ENCODE measurements at regions of chr7 and their contacts with region 1.

Region 1: GRCh38 chr7:129825496-129826267 is 127.1 kb downstream of the UBE2H start:
- DNase-seq: peak; percentile 96

Region 2: DNA sequence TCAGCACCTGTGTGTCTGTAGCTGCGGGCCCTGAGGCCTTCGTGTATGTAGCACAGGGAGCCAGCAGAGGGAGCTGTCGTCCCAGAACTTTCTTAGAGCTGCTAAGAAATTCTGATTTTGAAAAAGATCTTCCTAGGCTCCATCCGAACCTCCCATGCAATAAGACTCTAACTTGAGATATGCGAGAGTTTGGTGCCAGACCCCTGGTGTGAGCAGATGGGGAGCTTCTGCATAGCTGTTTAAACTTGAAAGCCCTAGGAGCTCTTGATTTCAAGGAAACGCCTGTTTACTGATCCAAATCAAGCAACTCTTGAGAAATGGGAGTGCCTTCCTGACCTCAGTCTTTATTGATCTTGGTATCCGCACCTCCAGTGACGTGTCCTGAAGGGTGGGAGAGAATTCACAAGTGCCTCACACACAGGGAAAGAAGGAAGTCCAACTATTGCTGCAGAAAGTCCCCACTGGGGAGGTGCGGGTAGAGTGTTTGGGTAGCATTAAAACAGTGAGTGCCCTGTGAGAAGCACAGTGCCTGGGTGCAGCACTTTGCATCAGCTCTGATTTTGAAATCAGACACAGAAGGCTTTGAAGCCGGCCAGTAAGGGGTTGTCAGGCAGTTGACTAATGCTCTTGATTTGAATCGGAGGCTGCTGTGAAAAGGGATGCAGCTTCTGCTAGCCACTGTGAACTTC is 457.8 kb before region 1 on chr7:
- intact Hi-C with region 1: loop called (anchors 10 kb)
- DNase-seq: peak; percentile 86

Region 3: GRCh38 chr7:129664029-129665012 is 161.4 kb before region 1 on chr7:
- intact Hi-C with region 1: loop called (anchors 5 kb)
- DNase-seq: no peak

Region 4: GRCh38 chr7:129952653-129953560 is 127.2 kb after region 1 on chr7 and contains the start of gene UBE2H:
- intact Hi-C with region 1: loop called (anchors 2 kb)
- DNase-seq: peak; percentile 97
- total RNA-seq, gene UBE2H: 228 TPM

Region 5: DNA sequence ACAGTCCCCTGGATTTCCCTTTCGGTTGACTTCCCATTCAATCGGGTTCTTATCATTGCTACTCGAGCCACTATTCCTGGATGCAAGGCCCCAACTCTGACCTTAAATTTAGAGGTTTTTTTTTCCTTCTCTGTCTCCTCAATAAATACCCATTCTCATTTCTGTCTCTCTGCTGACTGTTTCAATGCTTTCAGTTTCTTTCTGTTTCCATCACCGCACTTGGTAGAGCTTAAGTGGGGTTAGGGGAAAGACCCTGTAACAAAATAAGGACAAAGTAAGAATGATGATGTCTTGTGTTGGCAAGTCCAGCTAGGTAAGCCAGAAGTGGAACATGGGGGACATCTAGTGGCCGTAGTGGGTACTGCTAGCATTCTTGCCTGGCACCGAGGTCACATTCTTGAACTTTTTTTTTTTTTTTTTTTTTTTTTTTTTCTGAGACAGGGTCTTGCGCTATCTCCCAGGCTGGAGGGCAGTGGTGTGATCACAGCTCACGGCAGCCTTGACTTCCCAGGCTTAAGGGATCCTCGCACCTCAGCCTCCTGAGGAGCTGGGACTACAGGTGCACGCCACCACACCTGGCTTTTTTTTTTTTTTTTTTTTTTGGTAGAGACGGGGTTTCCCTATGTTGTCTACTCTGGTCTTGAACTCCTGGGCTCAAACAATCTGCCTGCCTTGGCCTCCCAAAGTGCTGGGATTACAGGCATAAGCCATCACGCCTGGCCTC is 185.2 kb after region 1 on chr7:
- intact Hi-C with region 1: loop called (anchors 2 kb)
- DNase-seq: peak; percentile 86